Endothelial cell of umbilical vein (primary cell): ENCODE measurements at regions of chr17 and their contacts with region 1.

Region 1: DNA sequence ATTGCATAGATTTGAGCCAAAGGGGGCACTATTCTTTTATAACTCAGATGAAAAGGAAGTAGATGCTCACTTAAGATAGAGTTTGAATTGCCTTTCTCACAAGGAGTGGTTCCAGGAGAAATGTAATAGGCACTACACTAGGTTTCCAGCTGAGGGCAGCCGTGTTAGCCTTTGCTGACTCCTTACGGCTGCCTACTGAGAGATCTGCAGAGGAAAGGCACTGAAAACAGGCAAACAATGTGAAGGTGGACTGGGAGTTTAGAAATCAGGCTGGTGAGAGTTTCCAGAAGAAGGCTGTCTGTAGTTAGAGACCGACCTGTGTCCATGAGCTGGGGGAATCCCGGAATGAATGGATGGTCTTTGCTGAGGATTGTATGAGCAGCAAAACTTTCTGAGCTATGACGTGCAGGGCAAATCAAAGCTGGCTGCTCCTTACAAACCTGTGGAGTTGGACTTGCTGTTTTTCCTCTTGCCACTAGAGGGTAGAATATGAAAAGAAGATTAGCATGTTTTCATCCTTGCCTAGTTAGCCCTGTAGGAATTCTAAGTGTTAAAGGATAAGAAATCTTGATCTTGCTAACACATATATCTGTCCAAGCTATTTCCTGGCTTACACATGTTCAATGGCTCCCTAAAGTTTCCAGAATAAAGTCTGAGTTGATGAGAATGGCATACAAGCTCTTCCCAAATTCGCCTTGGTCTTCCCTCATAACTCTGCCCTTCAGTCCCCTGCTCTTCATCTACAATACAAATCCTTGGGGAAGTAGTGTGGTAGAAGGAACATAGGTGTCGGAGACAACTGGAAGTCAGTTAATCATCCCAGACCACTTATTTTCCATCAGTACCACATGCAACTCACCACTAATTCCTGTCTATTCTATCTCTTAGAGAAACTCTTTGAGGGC is 20.1 kb upstream of the TAOK1 start:
- DNase-seq: peak; percentile 91
- H3K4me3 ChIP-seq: peak overlapping the region in 1 of 3 experiments; percentile 65
- H3K27ac ChIP-seq: no peak overlapping the region
- H3K4me1 ChIP-seq: no peaks in the 10 kb centered on the region
- H3K27me3 ChIP-seq: no peaks in the 10 kb centered on the region
- CTCF ChIP-seq: peak; percentile 59 to 63
- POLR2A ChIP-seq: no peak

Region 2: GRCh38 chr17:29124117-29124924 is 245.8 kb before region 1 on chr17:
- CTCF ChIA-PET with region 1: interaction called, 15 read pairs
- POLR2A ChIA-PET with region 1: no interaction called
- dilution Hi-C with region 1: no loop called
- intact Hi-C with region 1: no loop called
- DNase-seq: peak; percentile 61
- H3K4me3 ChIP-seq: no peak overlapping the region
- H3K27ac ChIP-seq: no peak overlapping the region
- H3K4me1 ChIP-seq: no peaks in the 10 kb centered on the region
- H3K27me3 ChIP-seq: no peaks in the 10 kb centered on the region
- CTCF ChIP-seq: peak; percentile 60 to 61
- POLR2A ChIP-seq: no peak

Region 3: GRCh38 chr17:29357821-29358232 is 12.3 kb before region 1 on chr17:
- CTCF ChIA-PET with region 1: interaction called, 24 read pairs
- POLR2A ChIA-PET with region 1: no interaction called
- dilution Hi-C with region 1: no loop called
- intact Hi-C with region 1: no loop called
- DNase-seq: no peak
- H3K4me3 ChIP-seq: no peak overlapping the region
- H3K27ac ChIP-seq: no peak overlapping the region
- H3K4me1 ChIP-seq: no peaks in the 10 kb centered on the region
- H3K27me3 ChIP-seq: no peaks in the 10 kb centered on the region
- CTCF ChIP-seq: no peak
- POLR2A ChIP-seq: no peak

Region 4: DNA sequence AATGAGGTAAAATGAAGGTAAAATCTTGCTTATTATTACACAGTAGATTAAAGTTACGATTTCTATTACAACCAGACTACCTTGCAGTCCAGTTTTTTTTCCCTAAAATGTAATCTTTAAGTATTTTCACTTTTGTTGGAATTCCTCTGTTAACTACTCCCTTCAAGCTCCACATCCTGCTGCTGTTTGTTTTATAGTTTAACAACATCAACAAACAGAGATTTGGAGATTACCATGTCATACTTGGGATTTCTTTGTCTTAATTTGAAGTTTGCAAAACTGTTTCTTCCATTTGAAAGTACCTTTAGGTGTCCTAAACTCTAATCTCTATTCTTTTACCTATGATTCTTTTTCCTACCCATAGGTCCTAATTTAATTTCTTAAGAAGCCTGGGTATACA is 113.4 kb after region 1 on chr17:
- CTCF ChIA-PET with region 1: interaction called, 12 read pairs
- POLR2A ChIA-PET with region 1: no interaction called
- dilution Hi-C with region 1: no loop called
- intact Hi-C with region 1: no loop called
- DNase-seq: no peak
- H3K4me3 ChIP-seq: no peak overlapping the region
- H3K27ac ChIP-seq: no peak overlapping the region
- H3K4me1 ChIP-seq: no peaks in the 10 kb centered on the region
- H3K27me3 ChIP-seq: no peaks in the 10 kb centered on the region
- CTCF ChIP-seq: no peak
- POLR2A ChIP-seq: no peak

Region 5: DNA sequence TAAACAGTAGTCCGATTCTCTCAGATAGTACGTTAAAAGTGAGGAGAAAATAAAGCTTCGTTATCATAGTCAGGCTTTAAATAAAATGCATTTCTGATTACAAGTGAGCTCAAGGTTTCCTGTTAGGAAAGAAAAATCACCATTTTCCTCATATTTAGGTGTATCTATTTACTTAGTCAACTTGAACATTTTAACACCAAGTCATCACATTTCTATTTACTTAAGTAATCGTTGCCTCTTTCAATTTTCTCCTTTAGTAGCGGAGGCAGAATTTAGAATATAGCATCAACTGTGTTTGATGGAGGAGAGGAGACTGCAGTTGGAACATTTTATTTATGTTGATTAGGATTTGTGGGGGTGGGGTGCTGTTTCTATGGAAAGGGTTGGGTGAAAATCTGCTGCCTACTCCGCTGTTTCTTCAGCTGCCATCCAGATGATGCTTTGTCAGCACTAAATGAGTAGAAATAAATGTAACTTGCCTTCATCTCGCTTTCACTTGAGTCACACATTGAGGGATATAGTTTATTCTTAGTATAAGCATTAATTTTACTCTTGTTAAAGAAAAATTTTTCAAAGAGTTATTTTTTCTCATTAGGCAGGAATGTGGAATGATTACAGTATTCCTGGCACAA is 154.5 kb after region 1 on chr17:
- CTCF ChIA-PET with region 1: interaction called, 12 read pairs
- POLR2A ChIA-PET with region 1: no interaction called
- dilution Hi-C with region 1: no loop called
- intact Hi-C with region 1: no loop called
- DNase-seq: no peak
- H3K4me3 ChIP-seq: no peak overlapping the region
- H3K27ac ChIP-seq: no peak overlapping the region
- H3K4me1 ChIP-seq: no peaks in the 10 kb centered on the region
- H3K27me3 ChIP-seq: no peaks in the 10 kb centered on the region
- CTCF ChIP-seq: no peak
- POLR2A ChIP-seq: no peak

Region 6: DNA sequence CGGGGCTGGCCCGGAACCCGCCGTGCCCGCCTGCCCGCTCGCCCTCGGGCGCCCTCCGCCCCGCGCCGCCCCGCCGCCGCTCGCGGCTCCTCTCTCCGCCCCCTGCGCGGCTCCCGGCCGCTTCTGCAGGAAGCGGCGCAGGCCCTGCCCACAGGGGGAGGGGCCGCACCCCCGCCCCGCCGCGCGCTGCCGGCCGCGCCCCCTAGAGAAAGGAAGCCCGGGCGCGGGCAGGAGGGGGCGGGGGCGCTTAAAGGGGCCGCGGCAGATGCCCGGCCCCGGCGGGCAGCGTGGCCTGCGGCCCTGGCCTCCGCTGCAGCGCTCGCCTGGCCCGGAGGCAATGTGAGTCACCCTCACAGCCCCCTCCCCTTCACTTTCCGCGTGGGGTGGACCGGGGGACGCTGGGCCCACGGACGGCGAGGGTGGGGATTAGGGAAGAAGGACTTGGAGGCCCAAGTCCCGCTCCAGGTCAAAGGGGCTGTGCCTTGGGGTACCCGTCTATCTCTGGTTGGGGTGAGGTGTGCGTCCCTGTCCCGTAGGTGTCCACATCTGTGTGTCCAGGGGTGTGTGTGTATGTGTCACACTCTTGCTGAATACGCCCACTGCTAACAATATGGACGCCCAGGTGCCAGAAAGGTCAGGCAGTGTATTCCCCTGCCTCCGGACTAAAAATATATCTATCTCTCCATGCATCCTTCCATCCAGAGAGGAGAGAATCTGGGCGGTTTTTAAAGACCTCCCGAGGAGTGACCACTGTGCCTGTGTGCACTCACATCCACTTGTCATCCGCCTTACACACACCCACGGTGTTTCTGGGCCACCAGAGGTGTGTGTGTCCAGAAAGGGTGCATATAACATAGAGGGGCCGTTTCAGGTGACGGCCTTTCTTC is 219.7 kb after region 1 on chr17 and contains the start of gene GIT1:
- CTCF ChIA-PET with region 1: interaction called, 58 read pairs
- POLR2A ChIA-PET with region 1: no interaction called
- dilution Hi-C with region 1: no loop called
- intact Hi-C with region 1: loop called (anchors 1 kb)
- DNase-seq: peak; percentile 82
- H3K4me3 ChIP-seq: peak within 1 kb of the TSS; percentile 58 to 69 (median 68)
- H3K27ac ChIP-seq: peak within 1 kb of the TSS; percentile 66
- H3K4me1 ChIP-seq: peaks cover 76% of the 10 kb centered on the region
- H3K27me3 ChIP-seq: no peaks in the 10 kb centered on the region
- CTCF ChIP-seq: no peak
- POLR2A ChIP-seq: peak; percentile 75
- total RNA-seq, gene GIT1: 82.0 and 92.5 TPM in 2 replicates